CD8-positive, alpha-beta memory T cell (primary cell): ENCODE measurements at regions of chr2 and their contacts with region 1.

Region 1: DNA sequence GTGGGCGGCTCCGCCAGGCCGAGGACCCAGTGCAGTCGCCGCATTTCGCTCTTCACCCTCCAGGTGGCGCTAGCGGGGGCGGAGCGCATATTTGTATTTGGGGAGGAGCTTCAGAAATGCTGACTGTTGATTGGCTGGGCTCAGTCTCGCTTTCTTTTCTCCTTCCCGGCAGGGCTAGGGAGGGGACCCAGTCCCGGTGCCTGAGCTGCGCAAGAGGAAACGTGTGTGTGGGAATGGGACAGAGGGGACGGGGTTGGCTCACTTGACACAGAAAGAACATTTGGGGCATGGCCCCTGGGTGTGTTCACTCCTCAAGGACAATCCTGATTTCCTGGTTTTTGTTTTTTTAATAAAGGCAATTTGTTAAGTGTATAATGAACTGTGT is 20.3 kb upstream of the DNMT3A start:
- DNase-seq: peak; percentile 88 to 95 (median 92)
- H3K4me3 ChIP-seq: peak overlapping the region; percentile 88
- H3K4me3 Mint-ChIP-seq: peak overlapping the region; percentile 86 to 95 (median 92)
- H3K27ac ChIP-seq: peak overlapping the region; percentile 69
- H3K27ac Mint-ChIP-seq: peak overlapping the region; percentile 84 to 99 (median 94)
- H3K4me1 ChIP-seq: peaks cover 16% of the 10 kb centered on the region
- H3K4me1 Mint-ChIP-seq: peaks cover 22 to 30% (median 23%) of the 10 kb centered on the region in 3 donors
- H3K27me3 ChIP-seq: no peaks in the 10 kb centered on the region
- H3K27me3 Mint-ChIP-seq: no peaks in the 10 kb centered on the region

Region 2: GRCh38 chr2:25063876-25064660 is 298.0 kb before region 1 on chr2:
- CTCF ChIA-PET with region 1: no interaction called
- POLR2A ChIA-PET with region 1: no interaction called
- DNase-seq: no peak
- H3K4me3 ChIP-seq: no peak overlapping the region
- H3K4me3 Mint-ChIP-seq: no peak overlapping the region
- H3K27ac ChIP-seq: no peak overlapping the region
- H3K27ac Mint-ChIP-seq: no peak overlapping the region
- H3K4me1 ChIP-seq: no peaks in the 10 kb centered on the region
- H3K4me1 Mint-ChIP-seq: no peaks in the 10 kb centered on the region
- H3K27me3 ChIP-seq: no peaks in the 10 kb centered on the region
- H3K27me3 Mint-ChIP-seq: no peaks in the 10 kb centered on the region

Region 3: GRCh38 chr2:25276569-25277465 is 85.2 kb before region 1 on chr2:
- CTCF ChIA-PET with region 1: interaction called, 13 read pairs
- POLR2A ChIA-PET with region 1: interaction called, 14 read pairs
- DNase-seq: peak; percentile 72 to 86 (median 76)
- H3K4me3 ChIP-seq: peak overlapping the region; percentile 41
- H3K4me3 Mint-ChIP-seq: peak overlapping the region; percentile 69 to 89 (median 78)
- H3K27ac ChIP-seq: peak overlapping the region; percentile 63
- H3K27ac Mint-ChIP-seq: peak overlapping the region; percentile 94 to 100 (median 96)
- H3K4me1 ChIP-seq: peaks cover 74% of the 10 kb centered on the region
- H3K4me1 Mint-ChIP-seq: peaks cover 50 to 80% (median 59%) of the 10 kb centered on the region in 3 donors
- H3K27me3 ChIP-seq: no peaks in the 10 kb centered on the region
- H3K27me3 Mint-ChIP-seq: peaks cover 0 to 2% of the 10 kb centered on the region in 2 donors

Region 4: GRCh38 chr2:25294573-25295462 is 67.2 kb before region 1 on chr2:
- CTCF ChIA-PET with region 1: interaction called, 13 read pairs
- POLR2A ChIA-PET with region 1: interaction called, 5 read pairs
- DNase-seq: peak; percentile 68 to 88 (median 79)
- H3K4me3 ChIP-seq: peak overlapping the region; percentile 12
- H3K4me3 Mint-ChIP-seq: peak overlapping the region; percentile 24 to 81 (median 76)
- H3K27ac ChIP-seq: peak overlapping the region; percentile 70
- H3K27ac Mint-ChIP-seq: peak overlapping the region; percentile 88 to 98 (median 94)
- H3K4me1 ChIP-seq: peaks cover 62% of the 10 kb centered on the region
- H3K4me1 Mint-ChIP-seq: peaks cover 39 to 47% (median 41%) of the 10 kb centered on the region in 3 donors
- H3K27me3 ChIP-seq: no peaks in the 10 kb centered on the region
- H3K27me3 Mint-ChIP-seq: no peaks in the 10 kb centered on the region

Region 5: DNA sequence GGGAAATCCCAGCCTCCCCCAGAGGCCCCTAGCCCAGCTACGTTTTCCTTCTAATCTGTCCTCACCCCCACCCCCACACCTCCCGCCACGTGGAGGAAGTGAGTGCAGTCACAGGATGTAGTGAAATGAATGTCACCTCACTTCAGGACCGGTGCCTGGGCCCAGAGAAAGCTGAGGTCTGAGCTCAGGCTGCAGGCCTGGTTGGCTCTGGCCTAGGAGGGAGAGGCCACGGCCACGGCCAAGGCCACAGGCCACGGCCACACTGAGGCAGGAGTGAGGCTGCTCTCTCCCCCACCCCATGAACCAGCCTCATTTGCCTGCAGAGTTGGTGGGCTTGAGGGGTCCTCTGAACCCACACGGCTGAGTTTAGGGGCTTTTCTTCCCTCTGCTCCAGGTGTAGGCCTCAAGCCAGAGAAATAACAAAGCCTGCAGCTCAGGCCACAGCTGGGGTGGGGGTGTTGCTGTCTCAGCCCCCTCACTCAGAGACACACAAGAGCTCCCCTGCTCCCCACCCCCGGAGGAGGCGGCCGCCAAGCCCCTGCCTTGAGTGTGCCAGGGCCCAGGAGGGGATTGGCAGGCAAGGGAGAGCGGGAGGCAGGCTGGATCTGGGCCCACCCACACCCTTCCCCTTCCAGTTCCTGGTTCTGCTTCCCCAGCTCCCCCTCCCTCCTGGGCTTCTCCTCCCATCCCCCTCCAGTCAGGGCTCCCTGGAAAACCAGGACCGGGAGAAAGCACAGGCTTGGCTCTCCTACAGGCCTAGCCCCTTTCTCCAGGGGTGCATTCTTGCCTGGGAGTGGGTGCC is 47.3 kb before region 1 on chr2:
- CTCF ChIA-PET with region 1: interaction called, 21 read pairs
- POLR2A ChIA-PET with region 1: interaction called, 9 read pairs
- DNase-seq: peak; percentile 50 to 76 (median 58)
- H3K4me3 ChIP-seq: peak overlapping the region; percentile 74
- H3K4me3 Mint-ChIP-seq: peak overlapping the region; percentile 76 to 87 (median 79)
- H3K27ac ChIP-seq: peak overlapping the region; percentile 44
- H3K27ac Mint-ChIP-seq: peak overlapping the region; percentile 86 to 95 (median 90)
- H3K4me1 ChIP-seq: peaks cover 64% of the 10 kb centered on the region
- H3K4me1 Mint-ChIP-seq: peaks cover 49 to 74% (median 51%) of the 10 kb centered on the region in 3 donors
- H3K27me3 ChIP-seq: no peaks in the 10 kb centered on the region
- H3K27me3 Mint-ChIP-seq: no peaks in the 10 kb centered on the region

Region 6: GRCh38 chr2:25342372-25343186 is 19.5 kb before region 1 on chr2:
- CTCF ChIA-PET with region 1: interaction called, 13 read pairs
- POLR2A ChIA-PET with region 1: interaction called, 6 read pairs
- DNase-seq: peak; percentile 70 to 87 (median 81)
- H3K4me3 ChIP-seq: peak overlapping the region; percentile 20
- H3K4me3 Mint-ChIP-seq: peak overlapping the region; percentile 71 to 91 (median 77)
- H3K27ac ChIP-seq: no peak overlapping the region
- H3K27ac Mint-ChIP-seq: peak overlapping the region in 4 of 8 donors; percentile 12 to 81 (median 42)
- H3K4me1 ChIP-seq: peaks cover 23% of the 10 kb centered on the region
- H3K4me1 Mint-ChIP-seq: peaks cover 23 to 33% (median 27%) of the 10 kb centered on the region in 3 donors
- H3K27me3 ChIP-seq: no peaks in the 10 kb centered on the region
- H3K27me3 Mint-ChIP-seq: peaks cover 0 to 1% of the 10 kb centered on the region in 2 donors

Region 7: DNA sequence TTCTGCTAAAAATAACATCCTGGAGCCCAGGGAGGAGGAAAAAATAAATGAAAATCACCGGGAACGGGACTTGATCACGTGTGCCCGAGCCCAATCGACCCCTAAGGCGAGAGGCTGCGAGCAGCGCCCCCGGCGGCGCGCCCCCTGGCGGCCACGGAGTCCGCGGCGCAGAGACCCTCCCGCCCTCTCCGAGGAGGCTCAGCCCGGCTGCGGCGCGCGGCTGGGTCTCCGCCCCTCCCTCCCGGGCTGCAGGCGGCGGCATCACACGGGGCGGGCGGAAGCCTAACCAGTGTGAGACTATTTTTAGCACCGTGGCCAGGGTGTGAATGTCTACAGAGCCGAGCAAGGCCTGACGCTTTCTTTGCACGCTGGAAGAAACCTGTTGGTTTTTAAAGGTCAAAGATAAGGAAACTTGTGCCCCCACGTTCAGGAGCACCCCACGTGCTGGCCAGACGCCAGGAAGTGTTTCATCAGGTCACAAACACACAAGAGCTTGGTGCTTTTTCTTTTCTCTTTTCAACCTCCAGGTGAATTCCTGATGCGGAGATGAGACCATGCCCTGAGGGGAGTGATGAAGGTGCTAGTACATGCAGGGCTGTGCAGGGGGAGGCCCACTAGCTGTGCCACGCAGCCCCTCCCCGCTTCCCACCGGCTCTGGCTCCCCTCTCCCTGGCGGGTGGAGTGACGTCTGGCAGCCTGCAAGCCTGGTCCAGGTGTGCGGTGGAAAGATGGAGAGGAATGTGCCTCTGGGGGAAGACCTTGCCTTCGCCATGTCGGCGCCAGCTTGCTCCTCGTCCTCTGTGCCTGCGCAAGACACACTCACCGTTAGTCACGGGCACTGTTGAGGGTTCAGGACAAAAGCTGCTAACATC is 14.9 kb after region 1 on chr2:
- CTCF ChIA-PET with region 1: interaction called, 116 read pairs
- POLR2A ChIA-PET with region 1: interaction called, 25 read pairs
- DNase-seq: peak; percentile 89 to 97 (median 93)
- H3K4me3 ChIP-seq: peak overlapping the region; percentile 49
- H3K4me3 Mint-ChIP-seq: peak overlapping the region; percentile 9 to 93 (median 81)
- H3K27ac ChIP-seq: peak overlapping the region; percentile 63
- H3K27ac Mint-ChIP-seq: peak overlapping the region; percentile 60 to 95 (median 91)
- H3K4me1 ChIP-seq: peaks cover 36% of the 10 kb centered on the region
- H3K4me1 Mint-ChIP-seq: peaks cover 22 to 37% (median 35%) of the 10 kb centered on the region in 3 donors
- H3K27me3 ChIP-seq: no peaks in the 10 kb centered on the region
- H3K27me3 Mint-ChIP-seq: peaks cover 0 to 3% of the 10 kb centered on the region in 2 donors